Heart left ventricle (tissue), 16 donors: ENCODE measurements at regions of chr22 and their contacts with region 1.

Region 1: DNA sequence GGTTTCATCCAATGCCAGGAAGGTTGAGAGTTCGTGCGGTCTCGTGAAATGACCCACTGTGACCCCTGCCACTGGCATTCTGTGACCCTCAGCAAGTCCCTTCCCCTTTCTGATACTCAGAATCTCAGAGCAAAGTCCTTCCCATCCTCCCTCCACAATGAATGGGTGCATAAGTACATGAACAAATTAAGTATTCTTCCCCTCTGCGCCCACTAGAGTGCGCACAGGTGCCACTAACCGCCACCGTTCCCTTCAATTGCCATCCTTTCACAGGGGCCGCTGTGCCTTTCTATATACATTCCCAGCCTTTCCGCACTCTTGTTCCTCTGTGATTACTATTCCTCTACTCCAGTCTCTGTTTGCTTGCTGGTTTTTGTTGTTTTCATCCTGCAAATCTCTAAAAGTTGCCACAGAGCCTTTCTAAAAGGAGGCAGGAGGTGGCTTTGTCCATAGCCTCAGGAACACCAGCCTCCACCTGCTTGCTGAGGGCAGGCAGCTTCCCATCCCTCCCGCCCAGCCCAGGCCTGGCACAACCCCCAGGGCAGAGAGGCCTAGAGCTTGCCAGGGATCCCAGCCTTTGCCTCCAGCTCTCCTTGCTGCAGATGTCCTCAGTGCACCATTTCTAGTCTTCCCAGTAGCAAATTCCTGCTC is 6.7 kb upstream of the AP1B1 start:
- DNase-seq: peak; percentile 49 to 76 (median 63)
- ATAC-seq: peak; percentile 78 to 91 (median 90)
- H3K4me3 ChIP-seq: no peak overlapping the region
- H3K27ac ChIP-seq: no peak overlapping the region
- H3K4me1 ChIP-seq: peaks cover 0 to 20% (median 0%) of the 10 kb centered on the region in 12 donors
- H3K27me3 ChIP-seq: no peaks in the 10 kb centered on the region
- CTCF ChIP-seq: peak; percentile 65 to 85 (median 78)
- POLR2A ChIP-seq: no peak

Region 2: DNA sequence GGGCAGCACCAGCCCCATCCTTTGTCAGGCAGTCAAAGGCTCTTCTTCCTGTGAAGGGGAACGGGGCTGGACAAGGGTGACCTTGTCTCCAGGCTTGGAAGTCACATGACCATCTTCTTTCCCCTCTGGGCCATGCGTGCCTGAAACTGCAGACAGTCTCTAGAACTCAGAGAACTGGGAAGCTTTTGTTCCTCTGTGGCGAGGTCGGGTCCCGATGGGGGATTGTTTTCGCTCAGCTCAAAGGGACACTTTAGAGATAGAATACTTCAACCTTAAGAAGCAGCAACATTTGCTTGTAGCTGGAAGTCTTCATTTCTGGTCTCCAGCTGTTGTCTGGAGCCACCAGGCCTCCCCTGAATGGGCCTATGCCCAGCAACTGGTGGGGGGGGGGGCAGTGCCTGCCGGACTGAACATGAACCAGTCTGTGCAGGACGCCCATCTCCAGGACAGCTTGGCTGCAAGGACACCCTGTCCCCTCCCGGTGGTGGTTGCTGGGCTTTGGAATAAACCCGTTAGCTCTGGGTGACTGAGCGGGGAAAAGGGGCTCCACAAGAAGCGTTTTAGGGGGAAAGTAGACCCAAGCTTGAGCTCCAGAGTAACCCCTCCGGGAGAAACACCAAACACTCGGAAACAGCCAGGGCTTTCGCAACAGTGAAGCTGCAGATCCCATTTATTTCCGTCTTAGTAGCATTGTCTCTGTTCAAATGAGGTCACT is 245.1 kb before region 1 on chr22:
- intact Hi-C with region 1: no loop called
- DNase-seq: peak in 2 of 5 donors; percentile 18 to 53
- ATAC-seq: peak in 3 of 4 donors; percentile 21 to 35 (median 29)
- H3K4me3 ChIP-seq: no peak overlapping the region
- H3K27ac ChIP-seq: peak overlapping the region in 10 of 12 donors; percentile 10 to 61 (median 42)
- H3K4me1 ChIP-seq: peaks cover 0 to 52% (median 19%) of the 10 kb centered on the region in 12 donors
- H3K27me3 ChIP-seq: no peaks in the 10 kb centered on the region
- CTCF ChIP-seq: no peak
- POLR2A ChIP-seq: no peak

Region 3: GRCh38 chr22:29524440-29525191 is 129.6 kb after region 1 on chr22:
- intact Hi-C with region 1: loop called (anchors 1 to 10 kb)
- DNase-seq: peak in 1 of 5 donors; percentile 37
- ATAC-seq: peak in 3 of 4 donors; percentile 79 to 85 (median 82)
- H3K4me3 ChIP-seq: no peak overlapping the region
- H3K27ac ChIP-seq: no peak overlapping the region
- H3K4me1 ChIP-seq: no peaks in the 10 kb centered on the region
- H3K27me3 ChIP-seq: no peaks in the 10 kb centered on the region
- CTCF ChIP-seq: peak in 11 of 12 donors; percentile 25 to 55 (median 39)
- POLR2A ChIP-seq: no peak

Region 4: GRCh38 chr22:29539105-29539504 is 144.0 kb after region 1 on chr22:
- intact Hi-C with region 1: loop called in 1 of 10 experiments (anchors 5 kb)
- DNase-seq: no peak
- ATAC-seq: no peak
- H3K4me3 ChIP-seq: no peak overlapping the region
- H3K27ac ChIP-seq: no peak overlapping the region
- H3K4me1 ChIP-seq: no peaks in the 10 kb centered on the region
- H3K27me3 ChIP-seq: no peaks in the 10 kb centered on the region
- CTCF ChIP-seq: no peak
- POLR2A ChIP-seq: no peak

Region 5: DNA sequence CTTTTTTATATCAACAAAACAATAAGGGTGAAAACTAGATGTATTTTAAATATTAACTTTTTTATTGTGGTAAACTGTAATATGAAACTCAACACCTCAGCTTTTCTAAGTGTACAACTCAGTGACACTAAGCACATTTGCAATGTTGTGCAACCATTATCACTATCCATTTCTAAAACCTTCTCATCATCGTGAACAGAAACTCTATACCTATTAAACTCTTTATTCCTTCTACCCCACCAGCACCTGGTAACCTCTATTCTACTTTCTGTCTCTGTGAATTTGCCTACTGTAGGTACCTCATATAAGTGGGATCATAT is 694.6 kb after region 1 on chr22:
- intact Hi-C with region 1: loop called in 1 of 10 experiments (anchors 5 kb)
- DNase-seq: no peak
- ATAC-seq: no peak
- H3K4me3 ChIP-seq: no peak overlapping the region
- H3K27ac ChIP-seq: no peak overlapping the region
- H3K4me1 ChIP-seq: peaks cover 0 to 7% (median 0%) of the 10 kb centered on the region in 12 donors
- H3K27me3 ChIP-seq: peaks cover 0 to 18% (median 0%) of the 10 kb centered on the region in 9 donors
- CTCF ChIP-seq: no peak
- POLR2A ChIP-seq: no peak